H1 (cell line): ENCODE measurements at regions of chr17 and their contacts with region 1.

Region 1: DNA sequence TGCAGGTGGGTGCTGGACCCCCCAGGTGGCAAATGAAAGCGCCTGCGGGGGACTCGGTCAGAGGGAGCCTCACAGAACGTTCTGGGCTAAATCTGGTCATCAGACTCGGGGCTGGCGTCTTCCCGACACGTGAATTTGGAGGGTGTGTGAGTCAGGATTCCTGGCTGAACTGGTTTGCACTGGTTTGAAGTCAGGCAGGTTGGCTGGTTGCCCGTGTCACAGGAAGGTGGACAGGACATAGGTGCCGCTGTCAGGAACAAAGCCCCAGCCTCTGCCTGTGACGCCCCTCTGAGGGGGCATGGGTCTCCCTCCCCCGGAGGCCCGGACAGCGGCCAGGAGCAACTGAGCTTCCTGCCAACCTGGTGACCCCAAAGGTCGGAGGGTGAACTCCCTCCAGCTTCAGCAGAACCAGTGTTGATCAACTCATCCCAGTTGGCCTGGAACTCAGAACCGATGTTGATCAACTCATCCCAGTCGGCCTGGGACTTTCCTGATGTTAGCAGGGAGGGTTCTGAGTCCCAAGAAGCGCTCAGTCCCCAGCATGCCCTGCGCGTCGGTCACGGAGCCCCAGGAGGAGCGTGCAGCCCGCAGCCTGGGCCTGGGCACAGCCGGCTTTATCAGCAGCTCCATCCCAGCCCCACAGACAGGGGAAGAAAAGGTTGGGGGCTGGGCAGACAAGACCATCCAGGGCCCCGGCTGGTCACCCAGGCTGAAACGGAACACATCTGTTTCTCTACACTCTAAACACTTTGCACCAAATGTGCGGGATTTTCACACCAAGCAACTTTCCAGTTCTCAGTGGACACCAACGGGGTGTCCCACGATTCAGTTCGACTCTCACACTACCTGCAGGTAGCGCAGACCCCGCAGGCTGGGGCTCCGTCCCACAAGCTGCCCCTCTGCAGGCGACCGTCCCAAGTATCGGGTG is 14.4 kb upstream of the METRNL start:
- DNase-seq: no peak
- H3K4me3 ChIP-seq: no peak overlapping the region
- H3K27ac ChIP-seq: no peak overlapping the region
- H3K4me1 ChIP-seq: no peaks in the 10 kb centered on the region
- H3K27me3 ChIP-seq: no peaks in the 10 kb centered on the region
- CTCF ChIP-seq: no peak
- EP300 ChIP-seq: no peak
- POLR2A ChIP-seq: no peak
- RAD21 ChIP-seq: no peak

Region 2: DNA sequence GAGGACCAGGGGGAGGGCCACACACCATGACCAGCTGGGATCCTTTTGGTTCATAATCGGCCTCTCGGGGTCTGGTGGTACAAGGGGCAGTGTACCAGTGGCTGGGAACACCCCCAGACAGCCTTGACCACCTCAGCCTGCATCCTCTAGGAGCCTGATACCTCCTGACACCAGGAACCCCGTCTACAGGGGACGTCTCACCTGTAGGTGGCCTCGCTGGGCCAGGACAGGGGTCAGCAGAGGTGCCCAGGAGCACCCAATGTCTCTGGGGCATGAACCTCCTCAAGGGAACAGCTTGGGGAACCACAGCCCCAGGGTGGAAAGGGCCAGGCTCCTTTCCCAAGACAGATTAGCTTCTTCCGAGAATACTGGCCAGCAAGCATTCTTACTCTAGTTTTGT is 11.9 kb after region 1 on chr17:
- CTCF ChIA-PET with region 1: interaction called, 12 read pairs
- POLR2A ChIA-PET with region 1: interaction called, 3 read pairs
- DNase-seq: no peak
- H3K4me3 ChIP-seq: no peak overlapping the region
- H3K27ac ChIP-seq: no peak overlapping the region
- H3K4me1 ChIP-seq: peaks cover 3 to 13% (median 5%) of the 10 kb centered on the region in 4 experiments; a peak in 6 of 7 replicates
- H3K27me3 ChIP-seq: peaks cover 11 to 37% (median 31%) of the 10 kb centered on the region in 4 experiments
- CTCF ChIP-seq: peak; percentile 49 to 58 (median 53)
- EP300 ChIP-seq: no peak
- POLR2A ChIP-seq: no peak
- RAD21 ChIP-seq: peak; percentile 43 to 60

Region 3: DNA sequence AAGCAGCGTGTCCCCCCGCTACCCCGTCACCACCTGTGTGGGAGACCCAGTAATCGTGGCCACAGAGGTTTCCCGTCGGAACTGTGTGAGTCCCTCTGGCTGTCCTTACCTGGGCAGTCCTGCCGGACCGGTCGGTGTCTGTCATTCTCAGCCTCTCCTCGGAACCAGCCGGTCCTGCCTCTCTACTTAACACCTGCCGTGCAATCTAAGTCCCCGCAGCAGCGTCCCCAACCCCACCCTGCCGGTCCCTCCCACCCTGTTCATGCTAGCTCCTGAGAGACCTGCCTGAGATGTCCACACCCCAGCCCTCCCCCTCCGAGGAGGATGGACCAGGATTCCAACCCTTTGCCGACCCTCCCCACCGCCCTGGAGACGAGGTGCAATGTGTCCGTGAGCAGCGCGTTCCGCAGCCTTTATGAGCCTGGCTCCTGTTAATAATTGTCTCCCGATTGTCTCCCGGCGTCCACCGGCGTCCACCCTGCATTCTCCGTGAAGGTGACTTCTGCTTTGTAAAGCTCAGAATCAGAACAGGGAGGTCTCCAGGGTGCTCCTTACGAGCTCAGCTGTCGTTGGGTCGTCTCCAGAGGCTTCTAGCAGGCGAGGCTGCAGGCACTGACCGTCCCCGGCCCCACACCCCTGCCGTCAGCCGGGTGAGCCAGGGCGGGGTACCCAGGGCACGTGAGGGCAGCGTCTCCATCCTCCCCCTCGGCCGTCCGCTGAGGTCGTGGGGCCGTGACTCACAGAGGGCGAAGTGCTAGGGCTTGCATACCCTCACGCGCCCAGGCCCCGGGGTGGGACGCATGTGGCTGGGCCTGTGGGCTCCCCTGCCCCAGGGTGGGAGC is 24.5 kb after region 1 on chr17:
- CTCF ChIA-PET with region 1: no interaction called
- POLR2A ChIA-PET with region 1: no interaction called
- DNase-seq: no peak
- H3K4me3 ChIP-seq: no peak overlapping the region
- H3K27ac ChIP-seq: no peak overlapping the region
- H3K4me1 ChIP-seq: peaks cover 0 to 32% (median 5%) of the 10 kb centered on the region in 4 experiments; a peak in 4 of 7 replicates
- H3K27me3 ChIP-seq: no peaks in the 10 kb centered on the region
- CTCF ChIP-seq: no peak
- EP300 ChIP-seq: no peak
- POLR2A ChIP-seq: no peak
- RAD21 ChIP-seq: no peak